Activated CD8-positive, alpha-beta T cell treated with anti-CD3 and anti-CD28 coated beads, Interleukin-2, amount 10 ng/mL, durations not matched to agents 7 days and 5 days (primary cell): ENCODE measurements at regions of chr5 and their contacts with region 1.

Region 1: DNA sequence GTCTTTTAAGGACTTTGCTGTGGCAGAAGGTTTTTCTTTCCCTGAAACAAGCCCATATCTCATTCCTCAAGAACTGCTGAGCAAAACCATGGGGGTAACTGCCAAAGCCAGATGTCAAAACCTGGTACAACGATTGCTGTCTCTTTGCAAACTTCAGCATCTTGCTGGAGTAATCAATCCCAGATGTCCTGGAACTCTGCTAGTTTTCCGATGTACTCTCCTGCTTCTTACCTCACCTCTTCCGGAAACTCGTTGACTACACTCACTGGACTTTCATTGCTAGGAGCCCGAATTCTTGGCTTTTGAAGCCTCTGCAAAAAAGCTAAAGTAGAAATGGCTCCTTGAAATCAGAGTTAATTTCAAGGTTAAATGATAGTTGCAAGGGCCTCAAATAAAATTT is 23.3 kb downstream of the RAD1 start:
- DNase-seq: no peak
- ATAC-seq: no peak
- H3K4me3 Mint-ChIP-seq: no peak overlapping the region
- H3K27ac Mint-ChIP-seq: no peak overlapping the region
- H3K4me1 Mint-ChIP-seq: no peaks in the 10 kb centered on the region
- H3K27me3 Mint-ChIP-seq: no peaks in the 10 kb centered on the region

Region 2: GRCh38 chr5:34522599-34523386 is 369.2 kb before region 1 on chr5:
- CTCF ChIA-PET with region 1: interaction called, 14 read pairs
- POLR2A ChIA-PET with region 1: no interaction called
- DNase-seq: peak; percentile 70
- ATAC-seq: peak; percentile 86
- H3K4me3 Mint-ChIP-seq: no peak overlapping the region
- H3K27ac Mint-ChIP-seq: no peak overlapping the region
- H3K4me1 Mint-ChIP-seq: peaks cover 4% of the 10 kb centered on the region
- H3K27me3 Mint-ChIP-seq: peaks cover 4% of the 10 kb centered on the region